Activated T-helper 1 cell treated with anti-CD3 and anti-CD28 coated beads, Interleukin-12 subunit alpha, Interleukin-12 subunit beta, Interleukin-2, Interleukin-4 antibody, amounts not matched to agents 30 ng/mL and 10 ng/mL and 1 ng/mL, durations not matched to agents 14 hours and 24 hours and 36 hours (primary cell): ENCODE measurements at regions of chr5 and their contacts with region 1.

Region 1: DNA sequence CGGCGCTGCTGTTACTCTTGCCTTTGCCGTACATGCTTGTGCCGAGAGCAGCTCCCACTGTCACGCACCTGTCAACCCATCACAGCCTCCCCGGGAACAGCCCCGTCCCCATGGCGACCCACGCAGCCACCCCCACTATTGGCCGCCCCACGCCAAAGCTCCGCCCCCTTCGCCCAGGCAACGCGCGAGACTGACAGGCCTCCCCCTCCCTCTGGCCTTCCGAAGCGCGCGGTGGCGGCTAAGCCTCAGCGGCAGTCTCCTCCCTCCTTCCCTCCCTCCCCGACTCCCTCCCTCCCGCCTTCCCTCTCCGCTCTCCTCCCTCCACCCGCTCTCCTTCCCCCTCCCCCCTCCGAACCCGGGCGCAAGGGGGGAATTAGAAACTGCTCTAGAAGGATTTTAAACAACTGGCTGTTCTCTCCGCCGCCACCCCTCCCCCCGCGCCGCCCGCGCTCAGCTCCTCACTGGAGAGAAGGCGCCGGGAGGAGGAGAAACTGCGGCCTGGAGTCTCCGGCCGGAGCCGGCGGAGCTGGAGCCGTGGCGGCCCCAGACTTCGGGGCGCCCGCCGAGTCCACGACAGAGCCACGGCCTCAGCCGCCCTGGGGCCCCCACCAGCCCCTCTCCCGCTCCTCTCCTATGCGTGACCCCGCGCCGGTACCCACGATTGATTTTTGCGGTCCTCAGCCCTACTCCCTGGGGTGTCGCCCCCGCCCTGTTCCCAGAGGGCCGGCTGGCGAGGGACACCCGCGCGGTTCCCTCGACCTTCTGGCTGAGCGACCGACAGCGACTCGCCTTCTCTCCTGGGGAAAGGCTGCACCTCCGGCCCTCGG is at the start of gene SSBP2:
- DNase-seq: peak; percentile 98
- H3K4me3 Mint-ChIP-seq: peak within 1 kb of the TSS; percentile 91
- H3K27ac Mint-ChIP-seq: peak within 1 kb of the TSS; percentile 92
- H3K4me1 Mint-ChIP-seq: peaks cover 27% of the 10 kb centered on the region
- H3K27me3 Mint-ChIP-seq: peaks cover 9% of the 10 kb centered on the region
- total RNA-seq, gene SSBP2: 8.4 and 12.7 TPM in 2 replicates

Region 2: DNA sequence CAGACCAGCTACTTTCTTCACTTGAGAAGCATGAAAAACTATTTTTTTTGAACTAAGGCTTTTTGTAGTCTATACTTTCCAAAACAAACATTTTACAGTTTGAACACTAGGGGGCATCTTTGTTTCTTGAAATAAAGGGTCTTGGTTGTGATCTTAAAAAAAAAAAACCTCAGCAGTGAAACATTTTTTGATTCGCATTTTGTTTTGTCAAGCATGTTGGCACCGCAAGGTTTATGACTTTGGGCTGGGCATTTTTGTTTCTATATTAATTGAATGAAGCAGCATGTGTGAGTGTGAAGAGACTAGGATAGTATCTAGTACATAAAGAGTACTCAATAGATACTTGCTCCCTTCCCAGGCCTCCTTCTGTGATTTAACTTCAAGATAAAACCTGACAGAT is 325.7 kb before region 1 on chr5:
- intact Hi-C with region 1: loop called (anchors 2 kb)
- DNase-seq: no peak
- H3K4me3 Mint-ChIP-seq: no peak overlapping the region
- H3K27ac Mint-ChIP-seq: no peak overlapping the region
- H3K4me1 Mint-ChIP-seq: peaks cover 34% of the 10 kb centered on the region
- H3K27me3 Mint-ChIP-seq: no peaks in the 10 kb centered on the region

Region 3: DNA sequence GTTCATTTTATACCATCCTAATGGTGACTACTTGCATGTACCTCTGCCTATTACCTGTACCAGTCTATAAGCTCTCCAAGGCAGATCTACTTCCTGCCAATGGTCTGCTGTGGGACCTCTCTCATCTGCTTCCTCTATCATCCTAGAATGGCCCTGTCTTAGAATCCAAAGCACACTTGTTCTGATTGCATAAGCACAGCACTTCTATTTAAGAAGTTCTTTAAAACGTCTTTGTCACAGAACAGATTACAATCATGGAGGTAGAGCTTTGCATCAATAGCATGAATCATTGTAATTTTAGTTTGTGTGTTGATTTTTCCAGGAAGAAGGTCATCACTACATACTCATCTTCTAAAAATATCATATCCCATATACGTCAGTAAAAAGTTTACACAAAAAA is 225.5 kb before region 1 on chr5:
- intact Hi-C with region 1: loop called (anchors 5 kb)
- DNase-seq: no peak
- H3K4me3 Mint-ChIP-seq: peak overlapping the region; percentile 3
- H3K27ac Mint-ChIP-seq: peak overlapping the region; percentile 88
- H3K4me1 Mint-ChIP-seq: peaks cover 14% of the 10 kb centered on the region
- H3K27me3 Mint-ChIP-seq: no peaks in the 10 kb centered on the region

Region 4: DNA sequence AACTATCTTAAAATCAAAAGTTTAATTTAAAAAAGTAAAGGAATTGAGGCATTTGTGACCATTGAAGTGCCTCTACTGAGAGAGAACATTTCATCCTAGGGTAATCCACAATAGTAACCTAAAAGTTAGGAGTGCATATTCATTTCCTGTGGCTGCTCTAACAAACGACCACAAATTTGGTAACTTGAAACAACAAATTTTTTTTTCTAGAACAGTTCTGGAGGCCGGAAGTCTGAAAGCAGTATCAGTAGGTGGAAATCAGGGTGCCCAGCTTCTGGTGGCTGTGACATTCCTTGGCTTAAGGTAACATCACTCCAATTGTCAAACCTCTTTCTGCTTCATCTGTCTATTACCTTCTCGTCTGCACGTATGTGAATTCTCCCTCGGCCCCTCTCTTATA is 66.8 kb after region 1 on chr5:
- intact Hi-C with region 1: no loop called
- DNase-seq: peak; percentile 3
- H3K4me3 Mint-ChIP-seq: no peak overlapping the region
- H3K27ac Mint-ChIP-seq: no peak overlapping the region
- H3K4me1 Mint-ChIP-seq: peaks cover 42% of the 10 kb centered on the region
- H3K27me3 Mint-ChIP-seq: peaks cover 2% of the 10 kb centered on the region

Region 5: GRCh38 chr5:81856948-81857928 is 106.0 kb after region 1 on chr5:
- intact Hi-C with region 1: no loop called
- DNase-seq: no peak
- H3K4me3 Mint-ChIP-seq: no peak overlapping the region
- H3K27ac Mint-ChIP-seq: no peak overlapping the region
- H3K4me1 Mint-ChIP-seq: peaks cover 20% of the 10 kb centered on the region
- H3K27me3 Mint-ChIP-seq: peaks cover 2% of the 10 kb centered on the region

Region 6: DNA sequence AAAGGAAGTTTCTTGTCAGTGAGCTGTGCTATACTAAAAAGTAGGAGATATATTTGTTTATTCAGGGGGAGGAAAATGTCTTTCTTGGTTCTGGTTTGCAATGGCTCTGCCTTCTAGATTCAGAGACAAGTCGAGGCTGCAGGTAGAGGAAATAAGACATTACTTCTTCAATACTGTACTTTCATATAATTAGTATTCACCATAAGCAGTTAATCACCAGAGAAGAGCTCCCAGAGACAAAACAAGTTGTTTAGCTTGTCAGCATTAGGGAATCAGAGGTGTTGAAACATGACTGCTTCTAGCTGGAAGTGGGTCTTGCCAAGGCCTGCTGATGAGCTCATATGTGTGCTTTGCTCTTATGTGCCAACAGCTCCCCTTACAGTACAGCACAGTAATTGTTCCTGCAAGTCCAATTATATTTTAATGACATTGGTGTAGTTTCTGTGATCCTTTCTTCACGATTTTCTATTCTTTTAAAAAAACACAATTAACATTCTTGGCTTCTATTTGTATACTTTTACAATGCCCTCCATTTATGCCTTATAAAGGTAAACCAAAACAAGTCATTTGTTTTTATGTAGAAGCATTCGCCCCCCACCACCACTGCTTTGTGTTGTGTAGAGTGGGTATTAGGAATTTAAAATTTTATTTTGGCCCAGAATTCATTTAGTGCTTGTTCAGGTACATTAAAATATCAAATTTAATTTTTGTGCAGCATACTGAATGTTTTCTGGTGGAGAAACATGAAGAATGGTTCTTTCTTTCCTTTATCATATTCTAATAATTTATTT is 414.7 kb after region 1 on chr5:
- intact Hi-C with region 1: loop called (anchors 10 kb)
- DNase-seq: no peak
- H3K4me3 Mint-ChIP-seq: no peak overlapping the region
- H3K27ac Mint-ChIP-seq: no peak overlapping the region
- H3K4me1 Mint-ChIP-seq: no peaks in the 10 kb centered on the region
- H3K27me3 Mint-ChIP-seq: no peaks in the 10 kb centered on the region

Region 7: DNA sequence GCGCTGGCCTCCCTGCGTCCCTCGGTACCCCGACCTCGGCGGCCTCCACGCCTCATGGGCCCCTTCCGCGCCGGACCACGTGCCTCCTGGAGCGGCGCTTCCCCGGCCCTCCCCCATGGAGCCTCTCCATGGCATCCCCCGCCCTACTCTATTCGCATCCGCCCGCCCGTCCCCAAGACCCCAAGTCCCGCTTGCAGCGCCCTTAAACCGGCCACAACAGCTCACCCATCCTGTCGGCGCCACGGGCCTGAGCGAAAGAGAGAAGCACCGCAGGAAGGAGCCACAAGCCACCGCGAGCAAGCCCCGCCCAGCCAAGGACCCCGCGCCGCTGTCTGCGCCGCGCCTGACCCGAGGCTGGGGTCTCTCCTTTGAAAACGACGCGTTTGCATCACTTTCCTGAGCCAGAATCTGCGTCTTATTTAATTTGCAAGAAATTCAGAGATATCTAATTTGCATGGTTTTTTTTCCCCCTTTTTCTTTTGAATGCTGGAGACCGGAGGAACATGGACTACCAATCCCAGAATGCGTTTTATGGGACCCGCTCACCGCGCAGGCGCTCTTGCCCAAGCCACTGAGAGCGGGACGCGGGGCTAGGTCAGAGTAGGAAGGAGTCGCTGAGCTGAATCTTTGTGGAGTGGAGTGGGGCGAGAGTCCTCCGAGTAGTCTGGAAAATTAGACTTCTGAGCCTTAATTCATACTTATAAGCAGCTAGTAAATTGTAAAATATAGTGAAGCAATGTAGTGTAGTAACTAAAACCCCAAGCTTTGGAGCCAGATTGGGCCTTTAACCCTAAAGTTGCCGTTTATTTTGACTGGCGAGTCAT is 527.1 kb after region 1 on chr5 and contains the start of gene RPS23:
- intact Hi-C with region 1: loop called (anchors 1 kb)
- DNase-seq: peak; percentile 81
- H3K4me3 Mint-ChIP-seq: peak within 1 kb of the TSS; percentile 92
- H3K27ac Mint-ChIP-seq: peak within 1 kb of the TSS; percentile 96
- H3K4me1 Mint-ChIP-seq: peaks cover 34% of the 10 kb centered on the region
- H3K27me3 Mint-ChIP-seq: no peaks in the 10 kb centered on the region
- total RNA-seq, gene RPS23: 2,220 and 2,235 TPM in 2 replicates